Activated CD4-positive, alpha-beta memory T cell treated with anti-CD3 and anti-CD28 coated beads for 36 hours (primary cell): ENCODE measurements at regions of chr4 and their contacts with region 1.

Region 1: DNA sequence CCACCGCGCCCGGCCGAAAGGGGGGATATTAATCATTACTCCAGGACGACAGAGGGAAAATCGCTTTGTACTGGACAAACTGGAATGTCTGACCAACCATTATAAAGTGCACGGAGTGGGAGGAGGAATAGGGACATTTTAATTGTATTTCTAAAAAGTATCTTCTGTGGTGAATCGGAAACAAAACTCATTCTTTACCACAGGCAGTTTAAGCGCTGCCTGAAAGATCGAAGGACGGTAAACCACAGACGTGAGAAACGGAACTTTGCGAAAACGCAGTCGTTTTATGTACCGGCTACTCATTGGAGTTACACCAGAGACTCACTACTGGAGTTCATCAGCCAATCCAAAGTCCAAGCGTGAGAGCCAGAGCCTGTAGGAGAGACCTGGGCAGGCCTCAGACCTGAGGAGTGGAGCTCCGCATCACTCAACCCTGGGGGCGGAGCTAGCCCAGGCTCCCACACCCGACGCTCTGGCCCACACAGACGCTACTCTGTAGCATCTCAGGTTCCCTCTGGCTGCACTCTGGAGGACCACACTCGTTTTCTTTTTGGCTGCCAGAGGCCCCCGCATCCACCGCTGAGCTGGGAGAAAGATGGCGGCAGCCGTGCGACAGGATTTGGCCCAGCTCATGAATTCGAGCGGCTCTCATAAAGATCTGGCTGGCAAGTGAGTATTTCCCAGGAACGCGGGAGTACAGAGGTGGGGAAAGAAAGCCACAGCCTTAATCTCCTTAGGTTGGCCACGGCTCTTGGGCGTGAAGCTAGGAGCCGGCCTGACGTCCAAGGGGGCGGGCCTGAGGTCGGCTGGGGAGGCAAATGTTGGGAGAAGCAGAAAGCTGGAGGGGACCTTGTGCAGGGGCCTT is at the start of gene COPS4:
- DNase-seq: peak; percentile 97
- H3K4me3 Mint-ChIP-seq: peak within 1 kb of the TSS; percentile 85
- H3K27ac Mint-ChIP-seq: peak within 1 kb of the TSS; percentile 98
- H3K4me1 Mint-ChIP-seq: peaks cover 28% of the 10 kb centered on the region
- H3K27me3 Mint-ChIP-seq: no peaks in the 10 kb centered on the region
- total RNA-seq, gene COPS4: 38.5 to 40.6 TPM

Region 2: GRCh38 chr4:83012687-83013419 is 22.0 kb before region 1 on chr4:
- CTCF ChIA-PET with region 1: interaction called, 33 read pairs
- POLR2A ChIA-PET with region 1: interaction called, 41 read pairs
- intact Hi-C with region 1: loop called (anchors 1 kb)
- DNase-seq: peak; percentile 98
- H3K4me3 Mint-ChIP-seq: peak overlapping the region; percentile 92
- H3K27ac Mint-ChIP-seq: peak overlapping the region; percentile 92
- H3K4me1 Mint-ChIP-seq: peaks cover 36% of the 10 kb centered on the region
- H3K27me3 Mint-ChIP-seq: no peaks in the 10 kb centered on the region